AG04450 (cell line): ENCODE measurements at regions of chr10 and their contacts with region 1.

Region 1: DNA sequence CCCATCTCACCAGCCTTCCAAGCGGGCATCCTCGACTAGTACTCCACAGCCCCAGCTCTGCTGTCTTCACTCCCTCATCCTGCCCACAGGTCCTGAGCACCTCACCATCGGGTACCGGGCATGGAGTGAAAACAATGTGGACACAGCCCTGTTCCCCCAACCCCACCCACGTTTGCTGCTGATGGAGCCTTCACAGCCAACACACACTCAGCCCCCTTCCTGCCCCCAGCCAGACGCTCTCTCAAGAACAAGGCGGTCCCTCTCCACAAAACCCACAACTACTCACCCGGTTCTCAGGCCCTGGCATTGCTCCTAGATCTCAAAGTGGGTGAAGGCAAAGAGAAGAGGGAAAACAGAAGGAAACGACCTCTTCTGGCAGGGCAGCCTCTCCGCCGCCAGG is 56.1 kb downstream of the SLIT1 start:
- DNase-seq: no peak
- H3K4me3 ChIP-seq: no peak overlapping the region
- H3K27ac ChIP-seq: no peak overlapping the region
- H3K27me3 ChIP-seq: peaks cover 5% of the 10 kb centered on the region
- CTCF ChIP-seq: no peak

Region 2: DNA sequence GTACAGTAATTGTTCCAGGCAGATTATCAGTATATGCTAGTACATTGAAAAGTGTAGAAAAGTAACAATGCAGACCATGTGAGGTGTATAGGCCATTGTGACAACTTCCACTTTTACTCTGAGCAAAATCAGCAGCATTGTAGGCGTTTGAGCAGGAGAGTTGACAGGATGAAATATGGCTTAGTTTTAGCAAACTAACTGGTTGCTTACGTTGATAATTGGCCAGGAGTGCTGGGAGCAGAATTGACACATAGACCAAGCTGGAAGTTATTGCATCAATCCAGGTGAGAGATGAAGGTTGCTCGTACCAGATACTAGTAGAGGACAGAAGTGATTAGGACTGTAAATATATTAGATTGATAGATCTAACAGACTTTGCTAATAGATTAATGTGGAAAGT is 251.6 kb before region 1 on chr10:
- CTCF ChIA-PET with region 1: interaction called, 13 read pairs
- POLR2A ChIA-PET with region 1: no interaction called
- DNase-seq: no peak
- H3K4me3 ChIP-seq: no peak overlapping the region
- H3K27ac ChIP-seq: no peak overlapping the region
- H3K27me3 ChIP-seq: no peaks in the 10 kb centered on the region
- CTCF ChIP-seq: no peak

Region 3: DNA sequence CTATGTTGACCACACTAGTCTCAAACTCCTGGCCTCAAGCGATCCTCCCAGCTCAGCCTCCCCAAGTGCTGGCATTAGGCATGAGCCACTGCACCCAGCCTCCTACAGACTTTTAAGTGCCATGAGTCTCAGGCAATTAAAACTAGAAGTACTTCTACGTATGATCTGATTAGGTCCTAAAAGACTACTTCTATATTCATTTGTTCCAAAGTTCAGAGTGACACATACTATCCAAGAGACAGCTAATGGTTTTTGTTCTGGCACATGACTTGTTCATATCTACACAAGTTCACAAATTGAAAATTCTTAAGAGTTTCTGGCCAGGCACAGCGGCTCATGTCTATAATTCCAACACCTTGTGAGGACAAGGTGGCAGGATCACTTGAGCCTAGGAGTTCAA is 151.1 kb after region 1 on chr10:
- CTCF ChIA-PET with region 1: no interaction called
- POLR2A ChIA-PET with region 1: no interaction called
- DNase-seq: no peak
- H3K4me3 ChIP-seq: no peak overlapping the region
- H3K27ac ChIP-seq: no peak overlapping the region
- H3K27me3 ChIP-seq: no peaks in the 10 kb centered on the region
- CTCF ChIP-seq: no peak